Tibial artery (tissue), 4 donors: ENCODE measurements at regions of chr18 and their contacts with region 1.

Region 1: GRCh38 chr18:56650944-56651770 is at the start of gene WDR7:
- DNase-seq: peak; percentile 98 to 99
- H3K4me3 ChIP-seq: peak within 1 kb of the TSS; percentile 67 to 94
- H3K27ac ChIP-seq: peak within 1 kb of the TSS; percentile 76 to 93
- H3K4me1 ChIP-seq: peaks cover 0 to 19% (median 7%) of the 10 kb centered on the region in 4 donors
- H3K27me3 ChIP-seq: no peaks in the 10 kb centered on the region
- CTCF ChIP-seq: no peak

Region 2: GRCh38 chr18:55415258-55415871 is 1235.8 kb before region 1 on chr18:
- intact Hi-C with region 1: loop called (anchors 10 kb)
- DNase-seq: peak; percentile 88 to 94
- H3K4me3 ChIP-seq: no peak overlapping the region
- H3K27ac ChIP-seq: no peak overlapping the region
- H3K4me1 ChIP-seq: no peaks in the 10 kb centered on the region
- H3K27me3 ChIP-seq: no peaks in the 10 kb centered on the region
- CTCF ChIP-seq: peak; percentile 82 to 85

Region 3: GRCh38 chr18:56638271-56639093 is 12.7 kb before region 1 on chr18 and contains the start of gene TXNL1:
- intact Hi-C with region 1: loop called (anchors 1 kb)
- DNase-seq: peak; percentile 98 to 100
- H3K4me3 ChIP-seq: peak within 1 kb of the TSS; percentile 77 to 78
- H3K27ac ChIP-seq: peak within 1 kb of the TSS; percentile 94
- H3K4me1 ChIP-seq: peaks cover 0 to 29% (median 12%) of the 10 kb centered on the region in 4 donors
- H3K27me3 ChIP-seq: no peaks in the 10 kb centered on the region
- CTCF ChIP-seq: no peak

Region 4: GRCh38 chr18:56702946-56703345 is 51.8 kb after region 1 on chr18:
- intact Hi-C with region 1: no loop called
- DNase-seq: no peak
- H3K4me3 ChIP-seq: no peak overlapping the region
- H3K27ac ChIP-seq: no peak overlapping the region
- H3K4me1 ChIP-seq: no peaks in the 10 kb centered on the region
- H3K27me3 ChIP-seq: no peaks in the 10 kb centered on the region
- CTCF ChIP-seq: peak in 1 of 2 experiments; percentile 8

Region 5: DNA sequence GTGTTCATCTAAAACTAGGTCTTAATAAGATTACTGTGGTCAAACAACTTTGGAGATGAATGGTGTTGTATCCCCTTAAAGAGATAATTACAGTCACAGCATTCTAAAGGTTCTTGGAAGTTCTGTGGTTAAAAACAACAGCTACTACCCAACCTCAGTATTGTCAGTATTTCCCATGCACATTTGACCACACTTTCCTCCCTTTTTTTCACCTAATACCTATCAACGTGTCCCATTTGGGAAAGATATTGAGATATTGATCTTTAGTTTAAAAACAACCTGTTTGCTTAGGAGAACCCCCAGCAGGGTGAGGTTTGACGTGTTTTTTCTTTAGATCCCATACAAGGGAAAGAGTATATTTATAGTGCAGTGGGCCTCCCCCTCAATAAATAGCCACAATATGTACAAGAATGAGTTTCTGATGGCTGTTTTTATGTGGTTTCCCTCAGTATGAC is 65.6 kb after region 1 on chr18:
- intact Hi-C with region 1: no loop called
- DNase-seq: no peak
- H3K4me3 ChIP-seq: no peak overlapping the region
- H3K27ac ChIP-seq: no peak overlapping the region
- H3K4me1 ChIP-seq: no peaks in the 10 kb centered on the region
- H3K27me3 ChIP-seq: no peaks in the 10 kb centered on the region
- CTCF ChIP-seq: no peak